ENCODE measurements at regions of chr7 and their contacts with region 1.

Region 1: DNA sequence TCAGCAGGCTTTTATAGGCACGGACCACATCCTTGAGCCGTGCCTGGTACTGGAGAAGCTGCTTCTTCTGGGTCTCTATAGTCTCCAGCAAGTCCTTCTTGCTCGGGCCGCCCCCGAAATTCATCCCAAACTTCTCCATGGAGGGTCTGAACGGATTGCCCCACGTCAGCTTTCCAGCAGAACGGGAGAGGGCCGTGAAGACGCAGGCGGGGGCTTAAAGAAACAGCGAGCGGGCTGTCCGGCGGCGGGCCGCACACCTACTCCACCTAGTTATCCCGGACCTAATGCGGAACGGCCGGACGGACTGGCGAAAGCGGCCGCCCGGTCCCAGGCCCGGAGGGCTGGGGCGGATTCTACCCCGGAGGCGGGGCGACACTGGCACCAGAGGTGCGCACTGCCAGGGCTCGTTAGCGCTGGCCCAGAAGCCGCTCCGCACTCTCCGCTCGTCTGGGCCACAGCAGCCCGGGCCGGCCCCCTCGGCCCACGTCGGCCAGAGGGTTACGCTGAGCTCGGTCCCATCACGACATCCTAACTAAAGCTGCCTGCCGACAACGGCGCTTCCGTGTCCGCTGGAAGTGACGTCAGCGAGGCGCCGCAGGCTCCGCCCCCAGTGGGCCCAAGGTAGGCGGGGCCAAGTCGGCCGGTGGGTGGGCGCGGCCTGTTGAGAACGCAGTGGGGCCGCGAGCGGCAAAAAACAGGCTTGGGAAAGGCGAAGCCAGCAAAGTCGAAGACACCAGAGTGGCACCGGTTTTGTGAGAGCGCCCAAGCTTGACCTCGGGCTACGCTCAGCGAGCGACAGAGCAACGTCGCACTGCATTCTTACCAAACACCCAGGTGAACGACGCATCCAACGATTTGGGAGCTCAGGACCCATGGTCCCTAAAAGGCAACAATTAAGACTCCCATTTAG is at the start of gene GCC1:
- DNase-seq: peak; percentile 91 to 96
- H3K4me3 ChIP-seq: peak within 1 kb of the TSS; percentile 94
- H3K4me3 Mint-ChIP-seq: peak within 1 kb of the TSS; percentile 83
- H3K27ac Mint-ChIP-seq: peak within 1 kb of the TSS; percentile 87
- H3K4me1 ChIP-seq: peaks cover 30% of the 10 kb centered on the region
- H3K4me1 Mint-ChIP-seq: peaks cover 34% of the 10 kb centered on the region
- H3K27me3 ChIP-seq: no peaks in the 10 kb centered on the region
- H3K27me3 Mint-ChIP-seq: no peaks in the 10 kb centered on the region
- CTCF ChIP-seq: no peak
- total RNA-seq, gene GCC1: 23.0 and 26.6 TPM in 2 replicates

Region 2: DNA sequence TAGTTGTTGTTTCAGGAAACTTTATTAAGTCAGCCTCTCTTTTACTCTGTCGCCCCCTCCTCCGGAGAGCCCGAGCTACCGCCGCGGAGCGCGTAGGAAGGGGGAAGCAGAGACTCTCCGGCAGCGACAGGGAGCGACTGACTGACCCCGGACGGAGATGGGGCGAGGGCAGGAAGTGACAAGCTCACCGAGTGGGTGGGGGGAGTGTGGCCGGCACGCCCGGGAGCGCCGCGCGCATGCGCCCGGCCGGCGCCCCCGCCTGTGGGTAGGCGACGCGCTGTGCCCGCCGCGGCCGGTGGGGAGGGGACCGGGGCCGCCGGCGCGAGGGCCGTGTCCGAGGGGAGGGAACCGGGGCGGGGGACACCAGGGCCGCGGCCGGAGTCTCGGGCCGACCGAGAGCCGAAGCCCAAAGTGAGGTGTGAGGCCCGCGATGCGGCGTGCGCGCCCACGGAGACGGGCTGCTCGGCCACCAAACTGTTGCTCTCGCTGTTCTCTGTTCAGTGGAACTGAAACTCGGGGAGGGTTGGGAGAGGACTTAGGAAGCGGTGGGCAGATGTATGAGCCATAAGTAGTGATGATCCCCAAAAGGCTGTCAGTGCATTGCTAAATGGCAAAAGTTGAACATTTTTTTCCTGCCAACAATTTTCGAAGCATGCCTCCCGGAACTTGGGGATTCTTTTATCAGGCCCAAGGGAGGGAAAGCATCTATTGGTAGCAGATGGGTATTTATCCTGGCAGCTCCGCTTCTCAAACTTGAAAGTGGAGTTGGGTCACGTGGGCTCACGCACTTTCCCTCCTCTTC is 192.5 kb before region 1 on chr7 and contains the start of gene ZNF800:
- CTCF ChIA-PET with region 1: no interaction called
- POLR2A ChIA-PET with region 1: interaction called, 5 read pairs
- intact Hi-C with region 1: loop called (anchors 10 kb)
- DNase-seq: peak; percentile 89 to 92
- H3K4me3 ChIP-seq: peak within 1 kb of the TSS; percentile 73
- H3K4me3 Mint-ChIP-seq: peak within 1 kb of the TSS; percentile 97
- H3K27ac Mint-ChIP-seq: peak within 1 kb of the TSS; percentile 93
- H3K4me1 ChIP-seq: no peaks in the 10 kb centered on the region
- H3K4me1 Mint-ChIP-seq: peaks cover 7% of the 10 kb centered on the region
- H3K27me3 ChIP-seq: no peaks in the 10 kb centered on the region
- H3K27me3 Mint-ChIP-seq: peaks cover 8% of the 10 kb centered on the region
- CTCF ChIP-seq: no peak
- total RNA-seq, gene ZNF800: 17.3 and 18.7 TPM in 2 replicates

Region 3: DNA sequence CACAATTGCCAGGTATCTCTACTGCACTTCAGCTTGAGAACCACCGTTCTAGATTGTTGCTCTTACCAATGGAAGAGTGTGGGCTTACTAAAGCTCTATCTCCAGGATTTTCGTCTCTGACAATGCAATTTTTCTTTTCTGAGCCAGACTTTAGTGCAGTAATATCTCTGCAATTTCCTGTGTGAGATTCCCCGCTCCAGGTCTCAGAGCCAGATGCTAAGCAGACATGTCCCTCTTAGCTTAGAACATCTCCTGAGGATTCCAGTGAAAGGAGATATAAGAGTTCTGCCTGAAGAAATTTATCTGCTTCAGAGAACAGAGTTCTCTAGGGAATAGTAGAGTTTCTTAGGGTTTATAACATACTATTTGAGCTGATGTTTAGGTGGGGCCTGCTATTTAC is 148.7 kb after region 1 on chr7:
- CTCF ChIA-PET with region 1: no interaction called
- POLR2A ChIA-PET with region 1: no interaction called
- intact Hi-C with region 1: no loop called
- DNase-seq: no peak
- H3K4me3 ChIP-seq: no peak overlapping the region
- H3K4me3 Mint-ChIP-seq: no peak overlapping the region
- H3K27ac Mint-ChIP-seq: no peak overlapping the region
- H3K4me1 ChIP-seq: no peaks in the 10 kb centered on the region
- H3K4me1 Mint-ChIP-seq: peaks cover 11% of the 10 kb centered on the region
- H3K27me3 ChIP-seq: no peaks in the 10 kb centered on the region
- H3K27me3 Mint-ChIP-seq: no peaks in the 10 kb centered on the region
- CTCF ChIP-seq: no peak

Measured in Caco-2 (cell line).